ENCODE measurements at regions of chr6 and their contacts with region 1.

Region 1: GRCh38 chr6:3075522-3076113 is 7.3 kb downstream of the RIPK1 start:
- DNase-seq: no peak
- CTCF ChIP-seq: no peak

Region 2: GRCh38 chr6:3057063-3057770 is 18.4 kb before region 1 on chr6:
- CTCF ChIA-PET with region 1: no interaction called
- POLR2A ChIA-PET with region 1: no interaction called
- DNase-seq: no peak
- CTCF ChIP-seq: no peak

Region 3: DNA sequence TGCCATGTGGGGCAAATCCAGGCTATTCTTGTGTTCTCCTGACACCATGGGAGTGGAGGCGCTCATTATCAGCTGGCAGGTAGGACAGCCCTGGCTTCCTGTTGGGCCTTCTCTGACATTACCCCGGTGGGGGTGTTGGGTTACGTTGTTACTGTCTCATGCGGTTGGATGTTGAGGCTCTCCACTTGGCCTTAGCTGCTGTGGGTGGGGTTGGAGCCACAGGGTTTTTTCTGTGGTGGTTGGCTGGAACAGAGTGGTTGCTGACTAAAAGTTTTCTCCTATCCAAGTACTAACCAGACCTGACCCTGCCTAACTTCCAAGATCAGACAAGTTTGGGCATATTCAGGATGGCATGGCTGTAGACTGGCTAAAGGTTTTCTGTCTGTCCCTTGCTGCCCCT is 12.8 kb after region 1 on chr6:
- CTCF ChIA-PET with region 1: interaction called, 12 read pairs
- POLR2A ChIA-PET with region 1: no interaction called
- DNase-seq: no peak
- CTCF ChIP-seq: no peak

Region 4: GRCh38 chr6:3147914-3148757 is 72.5 kb after region 1 on chr6:
- CTCF ChIA-PET with region 1: no interaction called
- POLR2A ChIA-PET with region 1: no interaction called
- DNase-seq: no peak
- CTCF ChIP-seq: no peak